Endothelial cell of umbilical vein (primary cell): ENCODE measurements at regions of chr20 and their contacts with region 1.

Region 1: GRCh38 chr20:56689852-56690507 is 60.9 kb downstream of the TFAP2C start:
- DNase-seq: no peak
- H3K4me3 ChIP-seq: no peak overlapping the region
- H3K27ac ChIP-seq: no peak overlapping the region
- H3K4me1 ChIP-seq: no peaks in the 10 kb centered on the region
- H3K27me3 ChIP-seq: no peaks in the 10 kb centered on the region
- CTCF ChIP-seq: no peak
- POLR2A ChIP-seq: no peak

Region 2: GRCh38 chr20:54938180-54939068 is 1751.6 kb before region 1 on chr20:
- CTCF ChIA-PET with region 1: no interaction called
- POLR2A ChIA-PET with region 1: no interaction called
- dilution Hi-C with region 1: no loop called
- intact Hi-C with region 1: no loop called
- DNase-seq: no peak
- H3K4me3 ChIP-seq: no peak overlapping the region
- H3K27ac ChIP-seq: no peak overlapping the region
- H3K4me1 ChIP-seq: no peaks in the 10 kb centered on the region
- H3K27me3 ChIP-seq: no peaks in the 10 kb centered on the region
- CTCF ChIP-seq: no peak
- POLR2A ChIP-seq: no peak

Region 3: DNA sequence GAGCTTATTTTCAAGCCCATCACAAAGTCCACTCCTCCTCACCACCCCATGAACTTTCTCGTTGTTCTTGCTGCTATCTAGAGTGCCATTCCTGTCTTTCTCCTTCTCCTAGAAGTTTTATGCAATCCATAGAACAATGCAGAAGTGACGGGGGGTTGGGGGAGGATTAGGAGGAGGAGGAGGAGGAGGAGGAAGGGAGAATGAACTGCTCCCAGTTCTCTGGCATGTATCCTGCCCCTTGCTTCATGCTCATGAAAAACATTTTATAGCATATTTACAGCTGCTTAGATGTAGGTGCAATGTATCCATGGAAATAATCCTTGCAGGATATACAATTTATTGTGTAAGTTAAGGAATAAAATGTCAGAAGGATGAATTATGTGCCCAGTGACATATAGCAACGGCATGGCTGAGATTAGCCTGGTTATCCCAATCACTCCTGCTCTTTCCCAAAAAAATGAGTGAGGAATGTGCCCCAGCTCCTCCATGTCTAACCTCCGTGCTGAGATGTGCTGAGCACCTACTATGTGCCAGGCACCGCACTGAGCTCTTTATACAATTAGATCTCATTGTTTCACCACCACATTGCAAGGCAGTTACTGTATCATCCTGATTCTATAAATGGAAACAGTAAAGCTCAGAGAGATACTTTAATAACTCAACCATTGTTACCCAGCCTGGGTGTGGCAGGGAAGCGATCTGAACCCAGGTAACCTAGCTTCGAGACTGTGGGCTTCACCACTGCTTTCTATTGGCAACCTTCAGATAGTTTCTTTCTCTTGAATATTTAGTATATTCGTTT is 102.5 kb before region 1 on chr20:
- CTCF ChIA-PET with region 1: no interaction called
- POLR2A ChIA-PET with region 1: no interaction called
- dilution Hi-C with region 1: no loop called
- intact Hi-C with region 1: no loop called
- DNase-seq: no peak
- H3K4me3 ChIP-seq: no peak overlapping the region
- H3K27ac ChIP-seq: no peak overlapping the region
- H3K4me1 ChIP-seq: no peaks in the 10 kb centered on the region
- H3K27me3 ChIP-seq: no peaks in the 10 kb centered on the region
- CTCF ChIP-seq: no peak
- POLR2A ChIP-seq: no peak

Region 4: DNA sequence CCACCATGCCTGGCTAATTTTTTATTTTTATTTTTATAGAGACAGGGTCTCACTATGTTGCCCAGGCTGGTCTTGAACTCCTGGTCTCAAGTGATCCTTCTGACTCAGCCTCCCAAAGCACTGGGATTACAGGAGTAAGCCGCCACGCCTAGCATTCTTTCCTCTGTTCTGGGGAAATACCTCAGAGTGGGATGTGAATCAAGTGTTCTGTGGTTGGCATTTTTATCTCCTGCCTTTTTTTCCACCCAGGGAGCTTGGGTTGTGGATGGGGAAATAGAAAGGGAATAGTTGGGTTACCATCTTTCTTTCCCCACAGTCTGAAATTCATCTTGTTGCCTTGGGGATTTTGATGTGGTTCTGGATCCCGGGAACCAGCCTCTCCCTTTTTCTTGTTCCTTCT is 36.8 kb before region 1 on chr20:
- CTCF ChIA-PET with region 1: no interaction called
- POLR2A ChIA-PET with region 1: no interaction called
- dilution Hi-C with region 1: no loop called
- intact Hi-C with region 1: no loop called
- DNase-seq: no peak
- H3K4me3 ChIP-seq: no peak overlapping the region
- H3K27ac ChIP-seq: no peak overlapping the region
- H3K4me1 ChIP-seq: no peaks in the 10 kb centered on the region
- H3K27me3 ChIP-seq: no peaks in the 10 kb centered on the region
- CTCF ChIP-seq: no peak
- POLR2A ChIP-seq: no peak

Region 5: GRCh38 chr20:56735191-56735711 is 45.3 kb after region 1 on chr20:
- CTCF ChIA-PET with region 1: interaction called, 4 read pairs
- POLR2A ChIA-PET with region 1: interaction called, 10 read pairs
- dilution Hi-C with region 1: no loop called
- intact Hi-C with region 1: no loop called
- DNase-seq: no peak
- H3K4me3 ChIP-seq: no peak overlapping the region
- H3K27ac ChIP-seq: no peak overlapping the region
- H3K4me1 ChIP-seq: no peaks in the 10 kb centered on the region
- H3K27me3 ChIP-seq: no peaks in the 10 kb centered on the region
- CTCF ChIP-seq: no peak
- POLR2A ChIP-seq: no peak

Region 6: DNA sequence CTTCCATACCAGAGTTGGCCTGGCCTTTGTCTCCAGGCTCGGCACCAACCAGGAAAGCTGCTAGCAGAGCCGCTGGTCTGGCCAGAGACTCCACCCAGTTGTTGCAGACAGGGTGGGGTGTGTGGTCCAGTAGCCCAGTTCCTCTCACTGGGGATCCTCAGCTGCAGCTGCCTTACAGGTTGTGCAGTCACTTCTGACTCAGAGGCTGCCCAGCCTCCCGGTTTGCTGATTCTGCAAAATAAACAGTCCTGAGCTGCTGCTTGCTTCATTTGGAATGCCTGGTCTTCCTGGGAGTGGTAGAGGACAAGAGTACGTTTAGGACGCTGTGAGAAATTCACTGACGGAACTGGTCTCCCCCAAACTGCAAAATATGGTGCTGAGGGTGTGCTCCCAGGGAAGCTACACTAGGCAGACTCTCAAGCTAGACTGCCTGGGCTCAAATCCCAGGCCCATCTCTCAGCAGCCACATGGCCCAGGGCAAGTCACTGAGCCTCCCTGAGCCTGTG is 185.1 kb after region 1 on chr20:
- CTCF ChIA-PET with region 1: no interaction called
- POLR2A ChIA-PET with region 1: no interaction called
- dilution Hi-C with region 1: no loop called
- intact Hi-C with region 1: no loop called
- DNase-seq: no peak
- H3K4me3 ChIP-seq: no peak overlapping the region
- H3K27ac ChIP-seq: no peak overlapping the region
- H3K4me1 ChIP-seq: no peaks in the 10 kb centered on the region
- H3K27me3 ChIP-seq: no peaks in the 10 kb centered on the region
- CTCF ChIP-seq: no peak
- POLR2A ChIP-seq: no peak